A549 (cell line): ENCODE measurements at regions of chr9 and their contacts with region 1.

Region 1: DNA sequence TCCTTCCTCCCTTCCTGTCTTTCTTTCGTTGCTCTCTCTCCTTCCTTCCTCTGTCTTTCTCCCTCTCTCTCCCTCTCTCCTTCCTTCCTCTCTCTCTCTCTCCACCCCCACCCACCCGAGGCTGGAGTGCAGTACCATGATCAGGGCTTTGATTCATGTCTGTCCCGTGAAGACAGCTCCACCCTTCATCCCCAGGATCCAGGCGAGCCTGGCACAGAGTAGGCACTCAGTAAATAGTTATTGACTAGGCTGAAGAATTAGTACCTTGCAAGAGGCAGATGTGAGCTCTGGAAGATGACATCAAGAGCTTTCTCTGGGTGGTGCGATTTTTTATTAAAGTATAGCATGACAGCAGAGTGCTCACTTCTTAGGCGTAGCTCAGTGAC is 24.0 kb upstream of the WDR38 start:
- DNase-seq: no peak
- ATAC-seq: peak; percentile 43 to 51; a peak in 4 of 6 replicates
- H3K4me3 ChIP-seq: no peak overlapping the region
- H3K27ac ChIP-seq: no peak overlapping the region
- H3K4me1 ChIP-seq: peaks cover 5% of the 10 kb centered on the region
- CTCF ChIP-seq: no peak
- EP300 ChIP-seq: no peak
- POLR2A ChIP-seq: no peak
- RAD21 ChIP-seq: no peak

Region 2: DNA sequence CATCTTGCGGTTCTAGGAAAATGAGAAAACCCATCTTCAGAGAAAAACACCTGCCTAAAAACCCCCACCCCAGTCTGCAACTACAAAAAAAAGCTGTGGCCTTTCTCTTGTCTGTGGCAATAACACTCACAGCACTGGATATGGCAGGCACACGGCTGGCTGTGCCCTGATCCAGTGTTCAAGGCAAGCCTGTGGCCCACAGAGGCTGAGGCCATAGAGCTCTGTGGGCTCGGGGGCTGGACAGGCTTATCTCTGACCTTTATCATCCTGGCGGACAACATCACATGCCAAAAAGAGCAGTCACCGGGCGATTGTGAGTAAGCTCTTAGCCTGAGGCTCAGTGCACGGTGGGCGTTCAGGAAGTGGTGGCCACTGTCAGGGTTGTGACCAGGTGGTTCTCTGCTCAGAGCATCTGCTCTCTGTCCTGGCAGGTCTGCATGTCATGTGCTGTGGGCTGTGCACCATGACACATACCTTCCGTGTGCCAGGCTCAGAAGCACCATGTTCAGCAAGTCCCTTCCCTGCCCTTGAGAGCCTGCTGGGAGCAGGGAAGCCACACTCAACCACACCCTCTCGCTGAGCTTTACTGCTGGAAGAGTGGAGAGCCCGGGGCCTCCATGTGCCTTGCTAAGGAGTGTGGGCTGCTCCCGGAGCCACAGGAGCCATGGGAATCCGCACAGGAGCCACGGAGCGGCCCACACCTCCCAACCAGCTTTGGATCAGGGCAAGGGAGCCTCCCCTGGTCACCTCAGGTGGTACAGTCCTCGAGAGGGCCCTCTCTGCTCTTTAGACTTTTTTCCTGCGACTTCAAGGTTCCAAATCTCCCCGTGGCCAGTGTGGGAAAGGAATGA is 10.6 kb before region 1 on chr9:
- CTCF ChIA-PET with region 1: interaction called, 12 read pairs
- POLR2A ChIA-PET with region 1: no interaction called
- DNase-seq: peak in 1 of 2 experiments; percentile 67
- ATAC-seq: peak; percentile 80 to 81
- H3K4me3 ChIP-seq: no peak overlapping the region
- H3K27ac ChIP-seq: peak overlapping the region; percentile 53 to 86
- H3K4me1 ChIP-seq: peaks cover 20% of the 10 kb centered on the region
- CTCF ChIP-seq: peak; percentile 13; the same call in 1 of the 3 replicates
- EP300 ChIP-seq: no peak
- POLR2A ChIP-seq: no peak
- RAD21 ChIP-seq: 0 out of 5 replicates have a peak, but pooled peaks have one; percentile 17